ENCODE measurements at regions of chr19 and their contacts with region 1.

Region 1: DNA sequence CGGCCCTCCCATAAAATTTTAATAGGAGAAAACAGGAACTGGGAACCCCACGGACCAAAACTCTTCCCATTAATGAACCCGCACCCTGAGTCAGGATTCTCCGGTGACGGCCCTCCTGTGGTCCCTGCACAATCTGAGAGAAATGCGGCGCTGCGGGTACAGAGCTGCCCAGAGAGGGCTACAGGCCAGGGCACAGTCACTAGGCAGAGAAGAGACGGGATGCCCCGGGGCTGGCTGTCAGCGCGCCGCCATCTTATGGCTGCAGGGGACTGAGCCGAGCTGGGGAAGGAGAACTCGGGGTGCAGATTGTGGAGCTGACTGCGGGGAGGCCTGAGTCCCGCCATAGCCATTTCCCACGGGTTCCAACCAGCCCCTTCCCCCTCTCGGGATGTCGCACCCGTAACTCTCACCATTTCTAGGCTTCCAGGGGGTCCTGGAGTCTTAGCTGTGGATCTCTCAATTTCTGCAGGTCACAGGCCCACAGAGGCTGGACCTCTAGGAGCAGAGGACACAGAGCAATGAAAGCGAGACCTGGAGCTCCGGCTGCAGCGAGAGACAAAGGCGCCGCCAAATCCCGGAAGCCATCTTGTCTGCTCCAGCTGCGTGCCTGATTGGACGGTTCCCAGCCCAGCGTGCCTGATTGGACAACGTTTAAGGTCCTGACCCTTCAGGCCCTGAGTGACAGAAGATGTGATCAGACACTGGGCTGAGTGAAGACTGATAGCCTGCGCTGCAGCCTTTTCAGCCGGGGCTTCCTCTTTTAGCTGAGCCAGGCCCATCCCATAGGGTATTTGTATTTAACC is at the start of gene ZNF675:
- DNase-seq: peak; percentile 96
- H3K4me3 ChIP-seq: peak within 1 kb of the TSS; percentile 64 to 84 (median 81)
- H3K27ac ChIP-seq: peak within 1 kb of the TSS; percentile 80 to 91 (median 84)
- H3K4me1 ChIP-seq: peaks cover 0 to 12% (median 6%) of the 10 kb centered on the region in 4 donors
- H3K27me3 ChIP-seq: no peaks in the 10 kb centered on the region
- CTCF ChIP-seq: no peak
- EP300 ChIP-seq: no peak
- POLR2A ChIP-seq: no peak
- total RNA-seq, gene ZNF675: 5.4 to 8.1 (median 6.7) TPM

Region 2: GRCh38 chr19:23395041-23395721 is 291.6 kb before region 1 on chr19 and contains the start of gene ZNF91:
- intact Hi-C with region 1: loop called (anchors 10 kb)
- DNase-seq: peak; percentile 98
- H3K4me3 ChIP-seq: peak within 1 kb of the TSS; percentile 76 to 90 (median 83)
- H3K27ac ChIP-seq: peak within 1 kb of the TSS; percentile 92 to 97 (median 96)
- H3K4me1 ChIP-seq: peaks cover 0 to 42% (median 23%) of the 10 kb centered on the region in 4 donors
- H3K27me3 ChIP-seq: no peaks in the 10 kb centered on the region
- CTCF ChIP-seq: no peak
- EP300 ChIP-seq: no peak
- POLR2A ChIP-seq: peak; percentile 82 to 87
- total RNA-seq, gene ZNF91: 39.8 to 88.1 (median 58.2) TPM

Region 3: DNA sequence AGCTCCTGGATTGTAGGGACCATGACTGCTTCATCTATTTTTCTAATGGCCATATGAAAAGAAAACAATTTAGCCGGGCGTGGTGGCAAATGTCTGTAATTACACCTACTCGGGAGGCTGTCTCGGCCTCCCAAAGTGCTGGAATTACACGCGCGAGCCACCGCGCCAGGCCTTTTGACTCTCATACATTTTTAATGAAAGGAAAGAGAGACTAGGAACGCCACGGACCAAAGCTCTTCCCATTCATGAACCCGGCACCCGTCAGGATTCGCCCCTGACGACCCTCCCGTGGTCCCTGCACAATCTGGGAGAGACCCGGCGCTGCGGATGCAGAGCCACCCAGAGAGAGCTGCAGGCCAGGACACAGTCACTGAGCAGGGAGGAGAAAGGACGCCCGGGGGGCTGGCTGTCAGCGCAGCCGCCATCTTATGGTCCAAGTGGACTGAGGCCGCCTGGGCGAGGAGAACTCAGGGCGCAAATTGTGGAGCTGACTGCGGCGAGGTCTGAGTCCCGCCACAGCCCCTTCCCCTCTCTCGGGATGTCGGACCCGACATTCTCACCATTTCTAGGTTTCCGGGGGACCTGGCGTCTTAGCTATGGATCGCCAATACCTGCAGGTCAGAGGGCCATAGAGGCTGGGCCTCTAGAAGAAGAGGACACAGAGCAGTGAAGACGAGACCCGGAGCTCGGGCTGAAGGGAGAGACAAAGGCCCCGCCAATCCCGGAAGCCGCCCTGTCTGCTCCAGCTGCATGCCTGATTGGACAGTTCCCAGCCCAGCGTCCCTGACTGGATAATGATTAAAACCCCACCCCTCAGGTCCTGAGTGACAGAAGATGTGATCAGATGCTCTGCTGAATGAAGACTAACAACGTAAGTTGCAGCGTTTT is 71.6 kb after region 1 on chr19 and contains the start of gene ZNF681:
- intact Hi-C with region 1: loop called (anchors 5 kb)
- DNase-seq: peak; percentile 93
- H3K4me3 ChIP-seq: peak within 1 kb of the TSS; percentile 45 to 70 (median 66)
- H3K27ac ChIP-seq: peak within 1 kb of the TSS; percentile 70 to 75 (median 74)
- H3K4me1 ChIP-seq: peaks cover 0 to 23% (median 7%) of the 10 kb centered on the region in 4 donors
- H3K27me3 ChIP-seq: no peaks in the 10 kb centered on the region
- CTCF ChIP-seq: peak in 1 of 4 experiments; percentile 9
- EP300 ChIP-seq: no peak
- POLR2A ChIP-seq: peak in 1 of 2 donors; percentile 9
- total RNA-seq, gene ZNF681: 0.55 to 1.2 (median 0.70) TPM